HepG2 (cell line): ENCODE measurements at regions of chr2 and their contacts with region 1.

Region 1: GRCh38 chr2:42663106-42663780 is 94.8 kb downstream of the MTA3 start:
- DNase-seq: peak; percentile 80
- ATAC-seq: peak; percentile 98
- H3K4me3 ChIP-seq: no peak overlapping the region
- H3K27ac ChIP-seq: no peak overlapping the region
- H3K4me1 ChIP-seq: peaks cover 4% of the 10 kb centered on the region; the same call in 1 of the 2 replicates
- H3K27me3 ChIP-seq: no peaks in the 10 kb centered on the region
- CTCF ChIP-seq: peak; percentile 97
- EP300 ChIP-seq: no peak
- POLR2A ChIP-seq: no peak
- RAD21 ChIP-seq: peak; percentile 95

Region 2: DNA sequence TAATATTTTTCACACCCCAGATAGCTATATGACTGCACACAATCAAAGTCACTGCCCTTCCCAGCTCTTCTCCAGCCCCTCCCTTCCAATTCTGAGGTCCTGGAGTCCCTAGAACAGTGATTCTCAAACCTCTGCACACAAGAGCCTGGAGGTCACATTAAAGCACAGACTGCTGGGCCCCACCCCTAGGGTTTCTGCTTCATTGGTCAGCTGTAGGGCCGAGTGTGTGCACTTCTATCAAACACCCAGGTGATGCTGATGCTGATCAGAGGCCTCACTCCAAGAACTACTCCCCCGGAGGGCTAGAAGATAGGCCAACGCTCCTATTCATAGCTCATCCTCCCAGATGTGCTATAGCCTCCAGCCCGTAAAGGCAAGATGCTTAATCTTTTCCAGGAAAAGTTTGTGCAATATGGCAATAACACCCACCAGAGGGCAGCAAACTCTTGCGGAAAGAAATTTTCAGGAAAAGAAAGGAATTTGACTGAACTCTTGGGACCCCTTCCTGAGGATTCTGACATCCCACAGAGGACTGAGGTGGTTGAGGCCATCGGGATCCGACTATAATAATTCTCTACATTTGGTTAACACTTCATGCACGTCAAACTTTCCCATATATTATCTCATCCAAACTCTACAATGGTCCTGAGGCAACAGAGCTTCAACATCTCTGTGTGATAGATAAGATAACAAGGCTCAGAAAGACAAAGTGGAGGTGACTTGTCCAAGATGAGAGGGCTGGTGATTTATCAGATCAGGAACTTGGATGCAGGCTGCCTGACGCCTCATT is 809.6 kb before region 1 on chr2:
- CTCF ChIA-PET with region 1: no interaction called
- POLR2A ChIA-PET with region 1: no interaction called
- in situ Hi-C with region 1: loop called (anchors 25 kb)
- intact Hi-C with region 1: loop called (anchors 5 kb)
- DNase-seq: peak; percentile 71
- ATAC-seq: peak; percentile 72
- H3K4me3 ChIP-seq: no peak overlapping the region
- H3K27ac ChIP-seq: no peak overlapping the region
- H3K4me1 ChIP-seq: peaks cover 20% of the 10 kb centered on the region
- H3K27me3 ChIP-seq: 0 out of 5 replicates have a peak, but pooled peaks cover 0 to 6% of the 10 kb centered on the region in 2 experiments
- CTCF ChIP-seq: peak; percentile 87
- EP300 ChIP-seq: no peak; a peak in 1 of 4 replicates
- POLR2A ChIP-seq: no peak
- RAD21 ChIP-seq: peak; percentile 81

Region 3: GRCh38 chr2:42360890-42361727 is 302.1 kb before region 1 on chr2 and contains the start of gene COX7A2L:
- CTCF ChIA-PET with region 1: no interaction called
- POLR2A ChIA-PET with region 1: no interaction called
- in situ Hi-C with region 1: no loop called
- intact Hi-C with region 1: loop called (anchors 5 kb)
- DNase-seq: peak; percentile 96
- ATAC-seq: peak; percentile 92
- H3K4me3 ChIP-seq: peak within 1 kb of the TSS; percentile 84 to 98 (median 94)
- H3K27ac ChIP-seq: peak within 1 kb of the TSS; percentile 96
- H3K4me1 ChIP-seq: peaks cover 43% of the 10 kb centered on the region
- H3K27me3 ChIP-seq: no peaks in the 10 kb centered on the region; a peak in 1 of 5 replicates
- CTCF ChIP-seq: peak; percentile 82
- EP300 ChIP-seq: no peak
- POLR2A ChIP-seq: peak; percentile 87 to 94
- RAD21 ChIP-seq: peak; percentile 33
- total RNA-seq, gene COX7A2L: 201 and 272 TPM in 2 replicates

Region 4: DNA sequence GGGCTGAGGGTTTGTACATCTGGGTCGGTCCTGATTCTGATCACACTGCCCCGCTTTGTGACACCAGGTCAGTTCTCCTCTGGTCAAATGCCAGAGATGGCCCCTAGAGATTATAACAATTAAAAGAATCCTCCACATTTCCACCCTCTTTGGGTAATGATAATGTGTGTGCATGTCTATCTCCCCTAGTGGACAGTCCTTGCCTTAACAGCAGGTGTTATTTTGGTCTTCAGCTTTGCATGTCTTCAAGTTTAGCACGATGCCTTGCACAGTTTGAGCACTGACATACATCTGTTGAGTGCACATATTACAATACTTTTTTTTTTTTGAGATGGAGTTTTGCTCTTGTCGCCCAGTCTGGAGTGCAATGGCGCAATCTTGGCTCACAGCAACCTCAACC is 276.6 kb before region 1 on chr2:
- CTCF ChIA-PET with region 1: interaction called, 4 read pairs
- POLR2A ChIA-PET with region 1: no interaction called
- in situ Hi-C with region 1: loop called (anchors 10 kb)
- intact Hi-C with region 1: loop called (anchors 1 kb)
- DNase-seq: peak; percentile 35
- ATAC-seq: peak; percentile 60
- H3K4me3 ChIP-seq: no peak overlapping the region
- H3K27ac ChIP-seq: no peak overlapping the region
- H3K4me1 ChIP-seq: peaks cover 20% of the 10 kb centered on the region
- H3K27me3 ChIP-seq: no peaks in the 10 kb centered on the region
- CTCF ChIP-seq: peak; percentile 29
- EP300 ChIP-seq: no peak
- POLR2A ChIP-seq: no peak
- RAD21 ChIP-seq: no peak

Region 5: DNA sequence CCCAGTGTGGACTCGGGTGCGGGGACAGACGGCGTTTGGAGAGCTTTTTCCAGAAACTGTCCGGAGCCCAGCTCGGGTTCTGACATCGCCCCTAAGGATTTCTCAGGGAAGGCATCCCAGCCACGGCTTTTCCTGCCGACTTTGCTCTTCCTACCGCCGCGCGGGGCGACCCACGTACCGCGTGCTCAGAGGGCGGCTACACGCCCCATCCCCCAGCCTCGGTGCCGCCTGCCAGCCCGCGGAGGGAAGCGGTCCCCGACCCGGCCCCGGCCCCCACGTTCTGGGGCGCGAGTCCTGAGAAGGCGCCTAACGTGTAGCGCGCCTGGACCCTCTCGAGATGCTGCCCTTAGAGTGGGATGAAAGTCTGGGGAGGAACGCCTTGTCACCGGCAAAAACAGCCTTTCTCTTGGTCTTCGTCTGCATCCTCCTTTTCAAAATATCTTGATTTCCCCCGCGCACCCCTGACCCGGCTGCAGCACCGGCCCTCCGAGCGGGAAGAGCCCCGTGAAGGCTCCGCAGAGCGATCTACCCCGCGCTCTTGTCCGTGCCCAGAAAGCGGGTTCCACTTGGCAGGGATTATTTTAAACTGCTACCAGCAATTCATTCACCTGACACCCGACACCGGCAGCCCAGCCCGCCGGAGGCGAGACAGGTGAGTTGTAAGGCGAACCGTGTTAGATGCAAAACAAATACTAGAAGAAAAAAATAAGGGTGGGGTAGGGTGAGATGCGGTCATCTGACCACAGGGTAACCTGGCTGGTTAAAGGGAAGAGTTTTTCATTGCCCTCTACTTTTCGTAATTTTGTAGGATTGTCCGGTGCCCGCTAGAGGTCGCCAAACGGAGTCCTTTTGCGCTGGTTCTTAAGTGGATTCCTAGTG is 168.6 kb before region 1 on chr2:
- CTCF ChIA-PET with region 1: interaction called, 28 read pairs
- POLR2A ChIA-PET with region 1: interaction called, 3 read pairs
- in situ Hi-C with region 1: loop called (anchors 5 kb)
- intact Hi-C with region 1: loop called (anchors 1 kb)
- DNase-seq: peak; percentile 87
- ATAC-seq: peak; percentile 67
- H3K4me3 ChIP-seq: peak overlapping the region; percentile 75 to 88 (median 86)
- H3K27ac ChIP-seq: peak overlapping the region; percentile 77
- H3K4me1 ChIP-seq: peaks cover 75% of the 10 kb centered on the region
- H3K27me3 ChIP-seq: no peaks in the 10 kb centered on the region
- CTCF ChIP-seq: peak; percentile 92
- EP300 ChIP-seq: peak in 1 of 2 experiments; percentile 31; a peak in 1 of 4 replicates
- POLR2A ChIP-seq: no peak
- RAD21 ChIP-seq: peak; percentile 90

Region 6: DNA sequence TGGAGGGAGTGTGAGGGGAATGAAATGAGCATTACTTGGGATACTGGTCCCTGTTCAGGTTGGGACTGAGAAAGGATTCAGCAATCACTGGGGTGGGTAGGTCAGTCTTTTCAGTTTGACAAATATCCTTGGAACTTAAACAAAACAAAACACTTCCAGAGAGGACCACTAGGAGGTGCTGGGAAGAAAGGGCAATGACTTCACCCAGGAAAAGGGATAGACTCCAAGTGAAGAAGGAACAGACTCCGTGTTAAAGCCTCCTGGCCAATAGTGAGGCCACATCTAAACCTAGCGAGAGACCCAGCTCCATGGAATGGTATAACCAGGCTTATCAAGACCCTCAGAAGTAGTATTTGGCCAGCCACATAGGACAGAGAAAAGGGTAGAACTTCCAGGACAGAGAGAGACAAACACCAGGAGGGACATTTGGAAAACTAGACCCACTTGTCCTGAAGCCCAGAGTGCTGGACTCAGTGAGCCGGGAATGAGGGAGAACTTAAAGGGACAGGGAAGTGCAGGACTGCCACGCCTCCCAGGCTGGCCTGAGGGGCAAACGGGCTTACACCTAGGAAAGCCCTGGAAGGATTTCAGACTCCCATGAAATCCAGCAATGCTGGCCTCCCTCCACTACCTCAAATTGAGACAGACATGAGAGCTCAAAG is 149.9 kb before region 1 on chr2:
- CTCF ChIA-PET with region 1: interaction called, 26 read pairs
- POLR2A ChIA-PET with region 1: no interaction called
- in situ Hi-C with region 1: no loop called
- intact Hi-C with region 1: loop called (anchors 1 kb)
- DNase-seq: peak; percentile 69
- ATAC-seq: peak; percentile 71
- H3K4me3 ChIP-seq: no peak overlapping the region
- H3K27ac ChIP-seq: no peak overlapping the region
- H3K4me1 ChIP-seq: peaks cover 24% of the 10 kb centered on the region
- H3K27me3 ChIP-seq: no peaks in the 10 kb centered on the region
- CTCF ChIP-seq: peak; percentile 78
- EP300 ChIP-seq: no peak
- POLR2A ChIP-seq: no peak
- RAD21 ChIP-seq: peak; percentile 79

Region 7: GRCh38 chr2:42568401-42569115 is 94.7 kb before region 1 on chr2 and contains the start of gene MTA3:
- CTCF ChIA-PET with region 1: no interaction called
- POLR2A ChIA-PET with region 1: interaction called, 3 read pairs
- in situ Hi-C with region 1: no loop called
- intact Hi-C with region 1: loop called (anchors 2 kb)
- DNase-seq: peak; percentile 27
- ATAC-seq: peak; percentile 74
- H3K4me3 ChIP-seq: peak within 1 kb of the TSS; percentile 74 to 95 (median 75)
- H3K27ac ChIP-seq: peak within 1 kb of the TSS; percentile 79
- H3K4me1 ChIP-seq: peaks cover 53% of the 10 kb centered on the region
- H3K27me3 ChIP-seq: no peaks in the 10 kb centered on the region; a peak in 1 of 5 replicates
- CTCF ChIP-seq: no peak
- EP300 ChIP-seq: no peak
- POLR2A ChIP-seq: no peak
- RAD21 ChIP-seq: no peak; the same call in 1 of the 2 replicates
- total RNA-seq, gene MTA3: 48.8 and 57.6 TPM in 2 replicates